PC-9 (cell line): ENCODE measurements at regions of chrX and their contacts with region 1.

Region 1: GRCh38 chrX:19990556-19991349 is at the start of gene BCLAF3:
- DNase-seq: peak; percentile 73 to 93
- H3K4me3 ChIP-seq: peak within 1 kb of the TSS; percentile 80
- H3K27ac ChIP-seq: 0 out of 2 replicates have a peak within 1 kb of the TSS, but pooled peaks have one; percentile 21
- H3K4me1 ChIP-seq: peaks cover 6% of the 10 kb centered on the region; the same call in 1 of the 2 replicates
- H3K27me3 ChIP-seq: no peaks in the 10 kb centered on the region
- CTCF ChIP-seq: peak; percentile 78
- total RNA-seq, gene BCLAF3: 6.7 and 7.9 TPM in 2 replicates

Region 2: GRCh38 chrX:19544693-19545305 is 446.0 kb before region 1 on chrX:
- CTCF ChIA-PET with region 1: no interaction called
- POLR2A ChIA-PET with region 1: no interaction called
- intact Hi-C with region 1: loop called (anchors 1 kb)
- DNase-seq: peak; percentile 26 to 43
- H3K4me3 ChIP-seq: no peak overlapping the region
- H3K27ac ChIP-seq: no peak overlapping the region
- H3K4me1 ChIP-seq: no peaks in the 10 kb centered on the region
- H3K27me3 ChIP-seq: no peaks in the 10 kb centered on the region
- CTCF ChIP-seq: peak; percentile 78

Region 3: GRCh38 chrX:19593690-19594089 is 397.1 kb before region 1 on chrX:
- CTCF ChIA-PET with region 1: no interaction called
- POLR2A ChIA-PET with region 1: no interaction called
- intact Hi-C with region 1: loop called (anchors 2 kb)
- DNase-seq: peak in 1 of 2 experiments; percentile 11
- H3K4me3 ChIP-seq: no peak overlapping the region
- H3K27ac ChIP-seq: peak overlapping the region; percentile 39; the same call in 1 of the 2 replicates
- H3K4me1 ChIP-seq: no peaks in the 10 kb centered on the region
- H3K27me3 ChIP-seq: no peaks in the 10 kb centered on the region
- CTCF ChIP-seq: peak; percentile 71

Region 4: DNA sequence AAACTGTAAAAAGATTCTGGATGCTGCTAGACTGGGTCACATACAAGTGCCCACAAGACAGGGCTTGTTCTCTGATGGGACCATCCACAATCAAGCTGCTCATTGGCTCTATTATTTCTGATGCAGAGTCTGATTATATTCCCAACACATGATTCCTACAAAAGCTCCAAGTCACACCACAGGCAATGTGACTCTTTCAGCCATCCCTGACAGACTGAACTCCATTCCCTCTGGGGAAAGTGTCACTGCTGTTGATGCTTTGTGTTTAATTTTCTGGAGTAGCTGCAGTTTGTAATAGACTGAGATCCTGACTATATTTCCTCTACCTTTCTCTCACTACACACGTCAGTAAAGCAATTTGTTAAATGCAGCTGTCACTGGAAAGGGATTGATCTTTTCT is 55.5 kb after region 1 on chrX:
- CTCF ChIA-PET with region 1: no interaction called
- POLR2A ChIA-PET with region 1: no interaction called
- intact Hi-C with region 1: no loop called
- DNase-seq: no peak
- H3K4me3 ChIP-seq: no peak overlapping the region
- H3K27ac ChIP-seq: no peak overlapping the region
- H3K4me1 ChIP-seq: no peaks in the 10 kb centered on the region
- H3K27me3 ChIP-seq: no peaks in the 10 kb centered on the region
- CTCF ChIP-seq: no peak